GM23248 (cell line): ENCODE measurements at regions of chr6 and their contacts with region 1.

Region 1: DNA sequence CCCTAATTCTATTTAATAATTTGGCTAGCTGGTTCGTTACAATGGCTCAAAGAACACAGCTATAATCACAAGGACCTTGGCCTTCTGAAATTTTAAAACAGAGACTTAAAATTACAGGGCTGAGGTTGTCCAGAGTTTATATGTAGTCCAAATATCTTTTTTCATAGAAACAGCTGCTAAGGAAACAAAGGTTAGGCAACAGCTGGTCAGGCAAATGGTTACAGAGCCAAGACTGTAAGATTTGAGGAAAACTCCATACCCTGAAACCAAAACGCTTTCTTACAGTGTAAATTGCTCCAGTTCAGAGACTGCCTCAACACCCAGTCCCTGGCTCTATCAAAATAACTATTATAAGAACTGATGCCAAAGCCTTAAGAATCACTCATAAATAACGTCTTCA is 9.7 kb upstream of the ARHGAP18 start:
- DNase-seq: peak; percentile 24
- H3K4me3 ChIP-seq: no peak overlapping the region
- H3K27ac ChIP-seq: no peak overlapping the region
- H3K4me1 ChIP-seq: peaks cover 9% of the 10 kb centered on the region; the same call in 1 of the 2 replicates
- H3K27me3 ChIP-seq: no peaks in the 10 kb centered on the region

Region 2: GRCh38 chr6:128731249-128732165 is 988.2 kb before region 1 on chr6:
- in situ Hi-C with region 1: no loop called
- DNase-seq: peak; percentile 63
- H3K4me3 ChIP-seq: no peak overlapping the region
- H3K27ac ChIP-seq: no peak overlapping the region
- H3K4me1 ChIP-seq: no peaks in the 10 kb centered on the region
- H3K27me3 ChIP-seq: no peaks in the 10 kb centered on the region

Region 3: GRCh38 chr6:129606664-129607063 is 113.0 kb before region 1 on chr6:
- in situ Hi-C with region 1: loop called (anchors 10 kb)
- DNase-seq: peak; percentile 25
- H3K4me3 ChIP-seq: no peak overlapping the region
- H3K27ac ChIP-seq: no peak overlapping the region
- H3K4me1 ChIP-seq: peaks cover 14% of the 10 kb centered on the region
- H3K27me3 ChIP-seq: no peaks in the 10 kb centered on the region

Region 4: DNA sequence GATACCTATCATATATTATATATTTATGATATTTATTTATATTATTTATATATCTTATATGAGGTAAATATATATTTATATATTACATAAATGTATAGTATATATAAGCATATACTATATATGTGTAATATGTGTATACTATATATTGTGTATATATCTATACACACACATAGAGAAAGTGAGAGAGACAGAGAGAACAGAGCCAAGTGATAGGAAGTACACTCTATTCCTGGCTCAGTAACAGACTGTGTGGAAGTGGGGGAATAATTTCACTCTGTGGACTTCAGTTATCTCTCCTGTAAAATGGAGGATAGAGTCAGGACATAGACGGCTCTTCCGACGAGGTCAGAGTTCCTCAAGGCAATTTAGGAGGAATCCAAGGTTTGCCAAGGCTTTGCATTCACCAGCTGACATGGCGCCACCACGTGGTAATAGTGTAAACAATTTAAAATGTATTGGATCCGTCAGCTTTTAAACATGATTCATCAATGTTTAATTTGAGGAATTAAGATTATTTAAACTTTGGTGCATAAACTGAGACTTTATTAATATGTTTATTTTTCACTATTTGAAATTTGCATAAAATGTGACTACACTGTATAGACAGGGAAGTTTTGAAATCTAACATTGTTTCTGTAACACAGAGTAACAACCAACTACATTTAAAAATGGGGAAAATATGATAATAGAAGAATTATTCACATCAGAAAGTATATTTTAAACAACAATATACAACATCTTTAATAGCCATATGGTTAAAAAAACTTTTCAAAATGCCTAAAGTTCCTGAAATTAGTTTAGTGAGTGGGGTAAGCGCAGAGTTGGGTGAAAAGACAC is 216.9 kb after region 1 on chr6:
- in situ Hi-C with region 1: no loop called
- DNase-seq: peak; percentile 78
- H3K4me3 ChIP-seq: 0 out of 2 replicates have a peak overlapping the region, but pooled peaks have one; percentile 24
- H3K27ac ChIP-seq: no peak overlapping the region
- H3K4me1 ChIP-seq: peaks cover 7% of the 10 kb centered on the region
- H3K27me3 ChIP-seq: no peaks in the 10 kb centered on the region